ENCODE measurements at regions of chr9 and their contacts with region 1.

Region 1: GRCh38 chr9:27529316-27530278 is at the start of gene MOB3B:
- DNase-seq: peak; percentile 80 to 92 (median 88)
- H3K4me3 ChIP-seq: peak within 1 kb of the TSS; percentile 54 to 97 (median 86)
- H3K27ac ChIP-seq: peak within 1 kb of the TSS; percentile 75 to 97 (median 94)
- H3K27me3 ChIP-seq: no peaks in the 10 kb centered on the region
- CTCF ChIP-seq: peak; percentile 78 to 99 (median 94)
- total RNA-seq, gene MOB3B: 9.4 to 62.2 (median 21.0) TPM

Region 2: GRCh38 chr9:27333241-27334052 is 196.2 kb before region 1 on chr9:
- intact Hi-C with region 1: loop called (anchors 1 kb)
- DNase-seq: peak in 6 of 10 donors; percentile 38 to 68 (median 62)
- H3K4me3 ChIP-seq: peak overlapping the region in 8 of 59 donors; percentile 3 to 41 (median 27)
- H3K27ac ChIP-seq: peak overlapping the region in 58 of 59 donors; percentile 22 to 95 (median 64)
- H3K27me3 ChIP-seq: no peaks in the 10 kb centered on the region
- CTCF ChIP-seq: peak; percentile 69 to 99 (median 96)

Region 3: GRCh38 chr9:27353474-27354229 is 175.9 kb before region 1 on chr9:
- intact Hi-C with region 1: loop called in 1 of 2 experiments (anchors 1 kb)
- DNase-seq: peak; percentile 33 to 96 (median 88)
- H3K4me3 ChIP-seq: peak overlapping the region in 8 of 59 donors; percentile 2 to 27 (median 8)
- H3K27ac ChIP-seq: peak overlapping the region; percentile 37 to 98 (median 91)
- H3K27me3 ChIP-seq: no peaks in the 10 kb centered on the region
- CTCF ChIP-seq: peak in 40 of 56 donors; percentile 6 to 55 (median 32)

Region 4: DNA sequence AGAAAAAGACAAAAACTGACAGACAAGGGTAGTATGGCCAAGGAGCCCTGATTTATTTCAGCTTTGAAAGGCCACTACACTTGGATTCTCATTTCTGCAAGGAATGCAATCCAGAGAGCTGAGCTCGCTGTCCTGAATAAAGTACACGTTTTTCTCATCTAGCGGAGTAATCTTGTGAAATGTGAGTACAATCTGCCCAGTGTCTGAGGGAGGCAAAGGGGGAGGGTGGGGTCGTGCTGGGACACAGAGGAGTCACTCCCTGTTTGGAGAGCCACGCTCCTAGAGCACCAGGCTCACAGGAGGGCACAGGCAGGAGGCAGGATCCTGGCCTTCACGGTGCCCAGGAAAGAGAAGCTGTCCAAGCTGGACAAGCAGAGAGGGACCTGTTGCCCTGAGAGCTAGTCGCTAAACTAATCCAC is 56.5 kb before region 1 on chr9:
- intact Hi-C with region 1: loop called in 1 of 2 experiments (anchors 5 kb)
- DNase-seq: peak in 7 of 10 donors; percentile 24 to 56 (median 47)
- H3K4me3 ChIP-seq: peak overlapping the region in 3 of 59 donors; percentile 3 to 11 (median 10)
- H3K27ac ChIP-seq: peak overlapping the region in 49 of 59 donors; percentile 4 to 93 (median 64)
- H3K27me3 ChIP-seq: no peaks in the 10 kb centered on the region
- CTCF ChIP-seq: no peak

Region 5: GRCh38 chr9:27573634-27574590 is 44.3 kb after region 1 on chr9:
- intact Hi-C with region 1: no loop called
- DNase-seq: peak; percentile 83 to 99 (median 96)
- H3K4me3 ChIP-seq: peak overlapping the region; percentile 60 to 97 (median 87)
- H3K27ac ChIP-seq: peak overlapping the region; percentile 86 to 100 (median 98)
- H3K27me3 ChIP-seq: no peaks in the 10 kb centered on the region
- CTCF ChIP-seq: peak in 15 of 56 donors; percentile 2 to 26 (median 9)

Measured in dorsolateral prefrontal cortex (tissue), 120 donors.